Aorta (tissue), 5 donors: ENCODE measurements at regions of chr2 and their contacts with region 1.

Region 1: DNA sequence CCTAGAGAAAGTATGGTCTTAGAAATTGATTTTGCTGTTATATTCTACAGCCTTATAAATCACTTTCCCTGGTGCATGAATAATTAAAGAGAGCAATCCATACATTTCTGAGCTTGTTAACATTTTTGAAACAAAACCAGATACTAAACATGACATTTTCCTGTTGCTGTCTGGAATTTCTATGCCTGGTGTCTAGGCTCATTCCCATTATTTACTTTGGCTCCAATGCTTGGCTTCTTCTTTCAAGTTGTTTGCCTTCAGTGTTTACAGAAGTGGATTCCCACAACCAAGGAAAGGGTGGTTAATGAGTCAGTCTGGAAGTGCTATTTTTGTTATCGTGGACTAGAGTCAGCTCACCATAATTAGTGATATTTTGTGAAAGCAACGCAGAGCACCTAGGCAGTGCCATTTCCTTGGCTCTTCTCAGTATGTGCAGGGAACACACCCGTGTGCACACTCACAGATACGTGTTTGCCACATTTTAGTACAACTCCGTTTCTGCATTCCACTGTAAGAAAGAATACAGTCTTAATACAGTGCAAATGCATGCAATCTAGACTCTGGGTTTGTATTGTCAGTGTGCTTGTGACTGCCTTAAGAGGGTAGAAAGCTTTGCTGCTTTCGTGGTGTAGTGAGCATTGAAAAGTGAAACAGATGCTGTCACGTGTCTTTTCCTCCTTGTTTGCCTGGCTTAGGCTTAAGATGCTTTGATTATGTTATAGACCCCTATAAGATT is 185.0 kb upstream of the RASGRP3 start:
- DNase-seq: no peak
- ATAC-seq: peak; percentile 80
- H3K4me3 ChIP-seq: peak overlapping the region in 1 of 2 donors; percentile 41
- H3K27ac ChIP-seq: peak overlapping the region; percentile 97 to 98
- H3K4me1 ChIP-seq: peaks cover 8 to 11% of the 10 kb centered on the region in 2 donors
- H3K27me3 ChIP-seq: no peaks in the 10 kb centered on the region

Region 2: GRCh38 chr2:32805104-32805766 is 486.2 kb before region 1 on chr2:
- intact Hi-C with region 1: no loop called
- DNase-seq: no peak
- ATAC-seq: no peak
- H3K4me3 ChIP-seq: no peak overlapping the region
- H3K27ac ChIP-seq: no peak overlapping the region
- H3K4me1 ChIP-seq: no peaks in the 10 kb centered on the region
- H3K27me3 ChIP-seq: no peaks in the 10 kb centered on the region

Region 3: GRCh38 chr2:33108483-33109443 is 182.7 kb before region 1 on chr2:
- intact Hi-C with region 1: loop called in 1 of 2 experiments (anchors 5 kb)
- DNase-seq: no peak
- ATAC-seq: peak; percentile 49
- H3K4me3 ChIP-seq: peak overlapping the region in 1 of 2 donors; percentile 20
- H3K27ac ChIP-seq: peak overlapping the region; percentile 37 to 85
- H3K4me1 ChIP-seq: peaks cover 10 to 20% of the 10 kb centered on the region in 2 donors
- H3K27me3 ChIP-seq: no peaks in the 10 kb centered on the region

Region 4: GRCh38 chr2:33210626-33211025 is 80.8 kb before region 1 on chr2:
- intact Hi-C with region 1: loop called in 1 of 2 experiments (anchors 5 kb)
- DNase-seq: peak; percentile 82 to 84
- ATAC-seq: peak; percentile 78
- H3K4me3 ChIP-seq: no peak overlapping the region
- H3K27ac ChIP-seq: peak overlapping the region in 1 of 2 donors; percentile 37
- H3K4me1 ChIP-seq: peaks cover 12 to 21% of the 10 kb centered on the region in 2 donors
- H3K27me3 ChIP-seq: no peaks in the 10 kb centered on the region

Region 5: DNA sequence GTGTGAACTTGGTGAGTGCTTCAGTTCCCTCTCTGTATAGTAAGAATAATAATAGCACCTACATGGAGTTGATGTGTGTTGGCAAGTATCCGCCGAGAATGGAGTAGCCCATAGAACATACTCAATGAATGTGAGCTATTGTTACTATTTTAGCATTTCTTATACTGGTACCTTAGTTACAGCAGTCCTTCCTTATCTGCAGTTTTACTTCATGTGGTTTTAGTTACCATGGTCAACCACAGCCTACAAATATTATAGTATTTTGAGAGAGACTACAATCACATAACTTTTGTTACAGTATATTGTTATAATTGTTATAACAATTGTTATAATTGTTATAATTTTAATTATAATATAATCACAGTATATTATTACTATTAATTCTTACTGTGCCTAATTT is 32.5 kb after region 1 on chr2:
- intact Hi-C with region 1: no loop called
- DNase-seq: no peak
- ATAC-seq: no peak
- H3K4me3 ChIP-seq: no peak overlapping the region
- H3K27ac ChIP-seq: no peak overlapping the region
- H3K4me1 ChIP-seq: peaks cover 7% of the 10 kb centered on the region in 2 donors
- H3K27me3 ChIP-seq: no peaks in the 10 kb centered on the region

Region 6: DNA sequence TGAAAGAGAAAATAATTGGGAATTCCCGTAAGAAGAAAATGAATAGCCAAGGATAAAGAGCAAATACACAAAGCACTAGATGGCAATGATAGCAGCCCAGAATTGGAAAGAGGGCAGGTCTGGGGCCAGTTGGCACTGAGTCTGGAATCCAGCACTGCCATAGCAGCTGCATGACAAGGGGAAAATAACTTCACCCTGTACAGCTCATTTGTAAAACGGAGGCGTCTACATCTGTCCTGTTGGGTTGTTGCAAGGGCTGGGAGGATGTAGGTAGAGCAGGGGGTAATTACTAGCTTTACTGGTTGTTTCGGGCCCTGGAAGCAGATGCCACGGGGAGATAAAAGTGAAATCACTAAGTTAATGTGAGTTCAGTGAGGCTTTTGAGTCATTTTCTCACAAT is 75.0 kb after region 1 on chr2:
- intact Hi-C with region 1: loop called in 1 of 2 experiments (anchors 5 kb)
- DNase-seq: peak; percentile 80 to 81
- ATAC-seq: peak; percentile 89
- H3K4me3 ChIP-seq: no peak overlapping the region
- H3K27ac ChIP-seq: peak overlapping the region; percentile 49 to 90
- H3K4me1 ChIP-seq: peaks cover 0 to 1% of the 10 kb centered on the region in 2 donors
- H3K27me3 ChIP-seq: no peaks in the 10 kb centered on the region

Region 7: GRCh38 chr2:33497221-33497650 is 205.8 kb after region 1 on chr2:
- intact Hi-C with region 1: no loop called
- DNase-seq: no peak
- ATAC-seq: no peak
- H3K4me3 ChIP-seq: no peak overlapping the region
- H3K27ac ChIP-seq: no peak overlapping the region
- H3K4me1 ChIP-seq: no peaks in the 10 kb centered on the region
- H3K27me3 ChIP-seq: no peaks in the 10 kb centered on the region